ENCODE measurements at regions of chr3 and their contacts with region 1.

Region 1: DNA sequence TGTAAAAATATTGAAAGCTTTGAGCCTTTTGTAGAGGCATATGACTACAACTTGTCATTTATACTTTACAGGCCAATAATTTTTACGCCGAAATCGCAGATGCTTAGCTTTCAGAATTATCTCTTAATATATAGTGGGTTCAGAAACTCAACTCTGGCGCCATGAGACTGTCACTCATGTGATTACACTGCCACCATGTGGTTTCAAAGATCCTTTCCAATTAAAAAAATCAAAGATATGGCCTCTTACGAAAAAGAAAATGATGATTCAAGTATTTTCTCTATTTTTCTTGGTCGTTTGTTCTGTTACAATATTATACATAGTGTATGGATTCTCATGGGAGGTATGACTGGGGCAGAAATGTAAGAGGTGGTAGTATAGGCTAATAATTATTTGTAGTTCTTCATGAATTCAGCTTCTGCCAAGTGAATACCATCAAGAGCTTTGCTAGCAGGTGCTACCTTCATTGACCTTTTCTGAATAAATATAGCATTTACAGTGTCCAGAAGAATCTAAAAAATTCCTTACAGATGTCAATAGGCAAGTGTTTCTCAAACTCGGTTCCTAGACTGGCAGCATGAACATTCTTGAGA is 751.7 kb upstream of the GOLIM4 start:
- DNase-seq: no peak
- H3K4me3 ChIP-seq: no peak overlapping the region
- CTCF ChIP-seq: peak; percentile 39

Region 2: GRCh38 chr3:168213920-168214319 is 633.5 kb before region 1 on chr3:
- CTCF ChIA-PET with region 1: interaction called, 98 read pairs
- POLR2A ChIA-PET with region 1: no interaction called
- DNase-seq: no peak
- H3K4me3 ChIP-seq: no peak overlapping the region
- CTCF ChIP-seq: no peak

Region 3: GRCh38 chr3:168511428-168512014 is 335.9 kb before region 1 on chr3:
- CTCF ChIA-PET with region 1: interaction called, 65 read pairs
- POLR2A ChIA-PET with region 1: no interaction called
- DNase-seq: no peak
- H3K4me3 ChIP-seq: no peak overlapping the region
- CTCF ChIP-seq: peak; percentile 30

Region 4: GRCh38 chr3:168796339-168796738 is 51.0 kb before region 1 on chr3:
- CTCF ChIA-PET with region 1: interaction called, 10 read pairs
- POLR2A ChIA-PET with region 1: no interaction called
- DNase-seq: no peak
- H3K4me3 ChIP-seq: no peak overlapping the region
- CTCF ChIP-seq: no peak

Region 5: GRCh38 chr3:168828943-168829342 is 18.4 kb before region 1 on chr3:
- CTCF ChIA-PET with region 1: interaction called, 11 read pairs
- POLR2A ChIA-PET with region 1: no interaction called
- DNase-seq: no peak
- H3K4me3 ChIP-seq: no peak overlapping the region
- CTCF ChIP-seq: no peak

Region 6: GRCh38 chr3:168834558-168834957 is 12.8 kb before region 1 on chr3:
- CTCF ChIA-PET with region 1: interaction called, 11 read pairs
- POLR2A ChIA-PET with region 1: no interaction called
- DNase-seq: no peak
- H3K4me3 ChIP-seq: no peak overlapping the region
- CTCF ChIP-seq: no peak

Region 7: DNA sequence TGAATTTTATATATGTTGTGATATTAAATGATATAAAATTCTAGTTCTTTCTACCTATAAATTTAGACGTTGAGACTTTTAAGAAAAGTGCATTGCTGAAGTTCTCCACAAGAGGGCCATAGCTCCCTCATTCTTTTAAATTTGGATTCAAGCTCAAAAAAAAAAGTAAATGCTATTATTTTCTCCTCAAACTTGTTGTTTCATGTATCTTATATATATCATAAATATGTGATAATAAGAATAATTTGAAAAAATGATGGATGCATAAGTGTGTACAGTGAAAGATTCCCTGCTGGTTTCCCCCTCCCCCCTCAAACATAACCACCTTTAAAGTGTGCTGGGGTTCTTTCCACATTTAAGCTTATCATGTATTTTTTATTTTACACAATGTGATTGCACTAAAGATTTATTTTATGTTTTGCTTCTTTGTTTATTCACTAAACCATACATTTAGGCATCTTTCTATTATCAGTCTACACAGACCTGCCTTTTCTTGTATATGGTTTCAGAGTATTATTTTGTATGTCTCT is 17.7 kb after region 1 on chr3:
- CTCF ChIA-PET with region 1: interaction called, 11 read pairs
- POLR2A ChIA-PET with region 1: no interaction called
- DNase-seq: no peak
- H3K4me3 ChIP-seq: no peak overlapping the region
- CTCF ChIP-seq: peak; percentile 49